WTC11 (cell line): ENCODE measurements at regions of chr17 and their contacts with region 1.

Region 1: DNA sequence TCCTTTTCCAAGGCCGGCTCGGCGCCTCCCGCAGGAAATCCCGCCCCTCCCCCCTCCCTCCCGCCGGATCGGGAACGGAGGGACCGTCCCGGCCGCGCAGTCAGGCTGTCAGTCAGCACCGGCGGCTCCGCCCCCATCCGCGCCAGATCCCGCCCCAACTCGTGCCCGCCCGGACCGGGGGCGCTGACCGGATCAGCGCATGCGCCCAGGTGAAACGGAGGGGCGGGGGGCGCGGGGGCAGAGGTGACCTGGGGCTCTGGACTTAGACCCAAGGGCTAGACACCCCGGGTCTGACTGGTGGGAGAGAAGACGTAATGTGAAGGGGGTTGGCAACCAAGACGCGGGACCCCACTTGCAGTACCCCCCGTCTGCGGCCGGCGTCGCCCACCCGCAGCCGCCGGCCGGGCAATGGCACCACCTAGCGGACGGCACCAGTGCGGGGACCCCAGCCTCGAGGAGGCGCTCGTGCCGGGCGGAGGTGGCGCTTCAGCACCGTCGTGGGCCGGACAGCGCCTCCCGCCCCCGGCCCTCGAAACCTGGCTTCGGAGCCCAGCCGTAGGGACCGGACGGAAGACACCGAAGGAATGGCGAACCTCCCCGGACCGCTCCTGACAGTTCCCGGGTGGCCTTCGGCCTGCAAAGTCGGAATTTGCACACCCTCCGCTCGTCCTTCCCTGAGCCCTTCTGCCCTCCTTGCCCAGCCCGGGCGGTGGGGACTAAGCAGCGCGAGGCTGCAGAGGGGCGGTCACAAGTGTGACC is at the start of gene CASKIN2:
- DNase-seq: peak; percentile 98
- ATAC-seq: peak; percentile 76
- H3K4me3 Mint-ChIP-seq: peak within 1 kb of the TSS; percentile 80
- H3K27ac Mint-ChIP-seq: no peak within 1 kb of the TSS
- H3K4me1 Mint-ChIP-seq: peaks cover 20% of the 10 kb centered on the region
- H3K27me3 Mint-ChIP-seq: no peaks in the 10 kb centered on the region
- CTCF ChIP-seq: peak; percentile 90
- total RNA-seq, gene CASKIN2: 31.3 to 32.2 TPM (median 31.9 TPM) in 3 replicates

Region 2: GRCh38 chr17:75364078-75364477 is 151.6 kb before region 1 on chr17:
- CTCF ChIA-PET with region 1: no interaction called
- POLR2A ChIA-PET with region 1: no interaction called
- DNase-seq: no peak
- ATAC-seq: no peak
- H3K4me3 Mint-ChIP-seq: no peak overlapping the region
- H3K27ac Mint-ChIP-seq: 0 out of 2 replicates have a peak overlapping the region, but pooled peaks have one; percentile 3
- H3K4me1 Mint-ChIP-seq: peaks cover 59% of the 10 kb centered on the region
- H3K27me3 Mint-ChIP-seq: no peaks in the 10 kb centered on the region
- CTCF ChIP-seq: no peak

Region 3: GRCh38 chr17:75504347-75504964 is 11.2 kb before region 1 on chr17:
- CTCF ChIA-PET with region 1: interaction called, 11 read pairs
- POLR2A ChIA-PET with region 1: interaction called, 3 read pairs
- DNase-seq: peak; percentile 73
- ATAC-seq: peak; percentile 83
- H3K4me3 Mint-ChIP-seq: no peak overlapping the region
- H3K27ac Mint-ChIP-seq: no peak overlapping the region
- H3K4me1 Mint-ChIP-seq: no peaks in the 10 kb centered on the region
- H3K27me3 Mint-ChIP-seq: no peaks in the 10 kb centered on the region
- CTCF ChIP-seq: no peak; the same call in 1 of the 2 replicates

Region 4: GRCh38 chr17:75549221-75550138 is 33.8 kb after region 1 on chr17:
- CTCF ChIA-PET with region 1: interaction called, 17 read pairs
- POLR2A ChIA-PET with region 1: interaction called, 3 read pairs
- DNase-seq: peak; percentile 76
- ATAC-seq: peak; percentile 83
- H3K4me3 Mint-ChIP-seq: peak overlapping the region; percentile 62
- H3K27ac Mint-ChIP-seq: peak overlapping the region; percentile 95
- H3K4me1 Mint-ChIP-seq: peaks cover 36% of the 10 kb centered on the region
- H3K27me3 Mint-ChIP-seq: no peaks in the 10 kb centered on the region
- CTCF ChIP-seq: no peak

Region 5: GRCh38 chr17:75572735-75573539 is 57.3 kb after region 1 on chr17:
- CTCF ChIA-PET with region 1: interaction called, 13 read pairs
- POLR2A ChIA-PET with region 1: no interaction called
- DNase-seq: no peak
- ATAC-seq: no peak
- H3K4me3 Mint-ChIP-seq: no peak overlapping the region
- H3K27ac Mint-ChIP-seq: no peak overlapping the region
- H3K4me1 Mint-ChIP-seq: no peaks in the 10 kb centered on the region
- H3K27me3 Mint-ChIP-seq: no peaks in the 10 kb centered on the region
- CTCF ChIP-seq: no peak

Region 6: GRCh38 chr17:75589012-75589918 is 73.6 kb after region 1 on chr17:
- CTCF ChIA-PET with region 1: interaction called, 11 read pairs
- POLR2A ChIA-PET with region 1: no interaction called
- DNase-seq: peak; percentile 95
- ATAC-seq: peak; percentile 89
- H3K4me3 Mint-ChIP-seq: peak overlapping the region; percentile 49
- H3K27ac Mint-ChIP-seq: no peak overlapping the region
- H3K4me1 Mint-ChIP-seq: peaks cover 5% of the 10 kb centered on the region
- H3K27me3 Mint-ChIP-seq: peaks cover 25% of the 10 kb centered on the region
- CTCF ChIP-seq: peak; percentile 49; the same call in 1 of the 2 replicates